Posterior cingulate gyrus (tissue), 11 donors: ENCODE measurements at regions of chr4 and their contacts with region 1.

Region 1: DNA sequence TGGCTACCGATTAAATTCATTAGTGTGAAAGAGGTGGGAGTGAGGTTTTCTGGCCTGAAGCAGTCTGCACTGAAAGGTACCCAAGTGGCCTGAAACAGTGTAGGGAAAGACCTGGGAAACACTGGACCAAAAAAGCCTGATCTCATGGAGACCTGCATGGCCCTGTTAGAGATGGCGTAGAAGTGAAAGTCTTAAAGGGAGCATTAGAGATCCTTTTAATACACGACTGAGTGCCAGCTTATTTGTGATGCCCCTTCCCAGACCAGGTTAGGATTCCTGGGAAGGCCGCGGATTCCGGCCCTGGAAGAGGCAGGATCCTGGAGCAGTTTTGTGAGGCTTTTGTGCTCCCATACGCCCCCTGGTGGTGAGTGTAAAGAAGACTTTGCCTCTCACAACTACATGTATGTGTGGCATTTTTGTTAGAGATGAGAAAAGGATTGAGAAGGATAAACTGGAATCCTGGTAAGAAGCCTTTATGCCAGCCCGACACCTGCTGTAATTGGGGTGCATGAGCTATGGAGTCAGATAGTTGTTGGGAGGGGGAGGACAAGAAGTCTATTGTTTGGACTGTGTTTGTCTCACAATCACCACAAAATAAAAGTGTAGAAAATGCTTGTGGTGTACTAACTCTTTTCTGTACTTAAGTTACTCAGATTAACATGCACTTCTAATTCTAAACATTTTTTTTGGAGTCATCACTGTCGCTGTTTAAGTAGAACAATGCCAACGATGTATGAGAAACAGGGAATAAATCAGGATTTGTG is 54.0 kb downstream of the JADE1 start:
- DNase-seq: peak; percentile 57 to 96 (median 84)

Region 2: GRCh38 chr4:128191115-128191781 is 672.2 kb before region 1 on chr4:
- intact Hi-C with region 1: loop called (anchors 1 kb)
- DNase-seq: peak in 8 of 10 donors; percentile 19 to 93 (median 64)

Region 3: GRCh38 chr4:128454281-128455075 is 409.0 kb before region 1 on chr4:
- intact Hi-C with region 1: loop called (anchors 2 kb)
- DNase-seq: peak; percentile 48 to 95 (median 74)

Region 4: GRCh38 chr4:128565565-128566186 is 297.8 kb before region 1 on chr4:
- intact Hi-C with region 1: loop called (anchors 1 kb)
- DNase-seq: peak in 6 of 10 donors; percentile 17 to 87 (median 34)

Region 5: DNA sequence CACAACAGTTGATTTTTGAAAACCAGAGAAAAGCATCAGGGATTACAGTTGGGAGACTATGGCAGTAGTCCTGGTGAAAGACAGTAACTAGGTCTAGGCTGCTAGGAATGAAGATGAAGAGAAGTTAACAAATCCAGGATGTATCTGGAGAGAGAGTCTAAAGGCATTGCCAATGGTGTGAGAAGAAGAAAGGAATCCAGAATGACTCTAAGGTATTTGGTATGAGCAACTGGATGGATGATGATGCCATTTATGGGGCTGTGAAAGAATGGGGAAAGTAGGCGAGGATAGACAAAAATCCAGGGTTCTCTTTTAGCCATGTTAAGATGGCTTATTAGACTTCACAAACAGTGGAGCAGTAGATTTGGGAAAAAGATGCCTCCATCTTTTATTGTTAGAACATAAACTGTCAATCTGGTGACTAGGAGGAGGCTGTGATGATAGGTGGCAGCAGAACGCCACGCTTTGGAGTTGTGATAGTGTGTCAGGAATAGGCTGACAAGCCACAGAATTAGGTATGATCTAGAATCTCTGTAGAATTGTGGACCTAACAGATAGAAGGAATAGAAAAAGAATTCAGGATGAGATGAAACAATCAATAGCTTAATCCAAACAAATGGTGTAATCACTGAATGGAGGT is 81.3 kb before region 1 on chr4:
- intact Hi-C with region 1: loop called (anchors 1 kb)
- DNase-seq: peak in 6 of 10 donors; percentile 13 to 54 (median 30)

Region 6: GRCh38 chr4:128809477-128810330 is 53.8 kb before region 1 on chr4 and contains the start of gene JADE1:
- intact Hi-C with region 1: loop called (anchors 1 kb)
- DNase-seq: peak; percentile 80 to 98 (median 86)

Region 7: DNA sequence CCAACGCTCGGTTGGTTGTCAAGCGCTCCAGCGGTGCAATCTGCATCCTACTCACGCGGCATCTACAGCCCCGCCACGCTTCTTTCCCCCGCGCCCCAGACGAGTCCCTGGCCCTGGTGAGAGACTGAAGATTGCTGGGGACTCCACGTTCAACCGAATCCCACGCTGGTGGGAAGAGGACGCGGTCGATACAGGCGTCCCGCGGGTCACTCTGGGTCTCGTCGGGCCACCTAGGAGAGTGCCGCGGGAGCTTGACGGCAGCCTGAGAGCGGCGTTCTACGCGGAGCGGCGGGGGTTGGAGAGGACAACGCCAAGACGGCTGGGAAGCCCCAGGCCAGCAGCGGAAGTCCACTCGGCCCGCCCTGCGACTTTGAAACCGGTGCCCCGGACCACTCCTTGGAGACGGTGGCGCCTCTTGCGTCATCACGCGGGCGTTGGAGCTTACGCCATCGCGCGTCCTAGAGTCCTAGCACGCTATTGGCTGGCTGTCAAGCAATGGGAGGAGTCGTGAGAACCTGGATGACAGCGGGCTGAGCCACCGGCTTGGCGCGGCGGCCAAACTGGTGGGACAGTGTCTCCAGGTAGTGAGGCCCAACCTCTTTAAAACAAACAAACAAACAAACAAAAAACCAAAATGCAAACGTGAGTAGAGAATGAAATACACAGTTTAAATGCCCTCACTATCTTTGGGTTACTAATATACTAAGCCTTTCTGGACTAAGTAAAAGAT is 229.9 kb after region 1 on chr4 and contains the start of gene SCLT1:
- intact Hi-C with region 1: loop called (anchors 5 kb)
- DNase-seq: peak; percentile 95 to 100 (median 98)